ENCODE measurements at regions of chr4 and their contacts with region 1.

Region 1: GRCh38 chr4:114659386-114660008 is 60.9 kb downstream of the UGT8 start:
- DNase-seq: peak; percentile 68
- ATAC-seq: peak; percentile 97
- H3K4me3 ChIP-seq: no peak overlapping the region
- H3K27ac ChIP-seq: no peak overlapping the region
- H3K4me1 ChIP-seq: no peaks in the 10 kb centered on the region
- H3K27me3 ChIP-seq: no peaks in the 10 kb centered on the region
- CTCF ChIP-seq: peak; percentile 84

Region 2: GRCh38 chr4:113987382-113987941 is 672.0 kb before region 1 on chr4:
- CTCF ChIA-PET with region 1: no interaction called
- POLR2A ChIA-PET with region 1: no interaction called
- intact Hi-C with region 1: no loop called
- DNase-seq: no peak
- ATAC-seq: no peak
- H3K4me3 ChIP-seq: no peak overlapping the region
- H3K27ac ChIP-seq: no peak overlapping the region
- H3K4me1 ChIP-seq: no peaks in the 10 kb centered on the region
- H3K27me3 ChIP-seq: no peaks in the 10 kb centered on the region
- CTCF ChIP-seq: no peak

Region 3: GRCh38 chr4:114386637-114387233 is 272.8 kb before region 1 on chr4:
- CTCF ChIA-PET with region 1: interaction called, 6 read pairs
- POLR2A ChIA-PET with region 1: no interaction called
- intact Hi-C with region 1: loop called (anchors 1 kb)
- DNase-seq: peak; percentile 55
- ATAC-seq: peak; percentile 42
- H3K4me3 ChIP-seq: no peak overlapping the region
- H3K27ac ChIP-seq: no peak overlapping the region
- H3K4me1 ChIP-seq: peaks cover 13% of the 10 kb centered on the region
- H3K27me3 ChIP-seq: no peaks in the 10 kb centered on the region
- CTCF ChIP-seq: peak; percentile 71

Region 4: DNA sequence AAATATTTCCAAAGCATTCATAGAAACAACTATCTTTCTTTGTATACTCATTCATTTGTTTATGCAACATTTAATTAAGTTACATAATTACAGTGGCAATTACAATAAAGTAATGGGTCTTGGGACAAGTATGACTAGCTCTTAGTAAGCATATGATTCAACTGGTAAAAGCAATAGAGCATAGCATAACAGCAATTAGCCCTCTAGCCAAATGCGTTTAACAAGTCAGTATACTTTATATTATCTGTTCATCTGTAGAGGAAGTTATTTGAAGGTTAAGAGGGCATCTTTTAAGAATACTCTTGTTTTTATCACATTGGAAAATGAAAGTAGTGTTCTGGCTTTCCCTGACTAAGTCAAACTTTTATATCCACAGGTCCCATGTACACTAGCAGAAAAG is 259.0 kb before region 1 on chr4:
- CTCF ChIA-PET with region 1: interaction called, 3 read pairs
- POLR2A ChIA-PET with region 1: no interaction called
- intact Hi-C with region 1: loop called (anchors 5 kb)
- DNase-seq: peak; percentile 46
- ATAC-seq: peak; percentile 87
- H3K4me3 ChIP-seq: no peak overlapping the region
- H3K27ac ChIP-seq: no peak overlapping the region
- H3K4me1 ChIP-seq: 0 out of 2 replicates have a peak, but pooled peaks cover 4% of the 10 kb centered on the region
- H3K27me3 ChIP-seq: no peaks in the 10 kb centered on the region
- CTCF ChIP-seq: no peak

Region 5: GRCh38 chr4:114417214-114417613 is 242.3 kb before region 1 on chr4:
- CTCF ChIA-PET with region 1: no interaction called
- POLR2A ChIA-PET with region 1: no interaction called
- intact Hi-C with region 1: loop called (anchors 1 kb)
- DNase-seq: peak; percentile 13
- ATAC-seq: peak; percentile 49; the same call in 1 of the 2 replicates
- H3K4me3 ChIP-seq: no peak overlapping the region
- H3K27ac ChIP-seq: no peak overlapping the region
- H3K4me1 ChIP-seq: no peaks in the 10 kb centered on the region
- H3K27me3 ChIP-seq: no peaks in the 10 kb centered on the region
- CTCF ChIP-seq: peak; percentile 35; the same call in 1 of the 2 replicates

Region 6: DNA sequence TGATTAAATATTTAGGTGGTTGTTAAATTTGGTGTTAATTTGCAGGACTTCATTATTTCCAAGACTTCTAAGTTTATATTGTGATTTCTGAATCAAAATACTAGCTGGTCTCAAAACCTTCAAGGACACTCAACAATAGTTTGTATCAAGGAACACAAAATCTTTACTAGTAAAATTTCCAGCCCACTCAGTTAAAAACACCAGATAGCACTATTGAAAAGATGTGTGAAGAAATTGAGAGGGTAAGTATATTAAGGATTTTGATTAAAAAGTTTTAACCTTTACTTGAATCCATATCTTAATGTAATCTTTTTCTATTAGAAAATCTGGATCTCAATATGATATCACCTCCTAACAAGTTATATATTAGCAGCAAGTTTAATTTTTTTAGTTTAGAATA is 150.2 kb before region 1 on chr4:
- CTCF ChIA-PET with region 1: no interaction called
- POLR2A ChIA-PET with region 1: no interaction called
- intact Hi-C with region 1: loop called (anchors 1 kb)
- DNase-seq: no peak
- ATAC-seq: no peak
- H3K4me3 ChIP-seq: no peak overlapping the region
- H3K27ac ChIP-seq: no peak overlapping the region
- H3K4me1 ChIP-seq: peaks cover 24% of the 10 kb centered on the region
- H3K27me3 ChIP-seq: no peaks in the 10 kb centered on the region
- CTCF ChIP-seq: no peak; the same call in 1 of the 2 replicates

Region 7: DNA sequence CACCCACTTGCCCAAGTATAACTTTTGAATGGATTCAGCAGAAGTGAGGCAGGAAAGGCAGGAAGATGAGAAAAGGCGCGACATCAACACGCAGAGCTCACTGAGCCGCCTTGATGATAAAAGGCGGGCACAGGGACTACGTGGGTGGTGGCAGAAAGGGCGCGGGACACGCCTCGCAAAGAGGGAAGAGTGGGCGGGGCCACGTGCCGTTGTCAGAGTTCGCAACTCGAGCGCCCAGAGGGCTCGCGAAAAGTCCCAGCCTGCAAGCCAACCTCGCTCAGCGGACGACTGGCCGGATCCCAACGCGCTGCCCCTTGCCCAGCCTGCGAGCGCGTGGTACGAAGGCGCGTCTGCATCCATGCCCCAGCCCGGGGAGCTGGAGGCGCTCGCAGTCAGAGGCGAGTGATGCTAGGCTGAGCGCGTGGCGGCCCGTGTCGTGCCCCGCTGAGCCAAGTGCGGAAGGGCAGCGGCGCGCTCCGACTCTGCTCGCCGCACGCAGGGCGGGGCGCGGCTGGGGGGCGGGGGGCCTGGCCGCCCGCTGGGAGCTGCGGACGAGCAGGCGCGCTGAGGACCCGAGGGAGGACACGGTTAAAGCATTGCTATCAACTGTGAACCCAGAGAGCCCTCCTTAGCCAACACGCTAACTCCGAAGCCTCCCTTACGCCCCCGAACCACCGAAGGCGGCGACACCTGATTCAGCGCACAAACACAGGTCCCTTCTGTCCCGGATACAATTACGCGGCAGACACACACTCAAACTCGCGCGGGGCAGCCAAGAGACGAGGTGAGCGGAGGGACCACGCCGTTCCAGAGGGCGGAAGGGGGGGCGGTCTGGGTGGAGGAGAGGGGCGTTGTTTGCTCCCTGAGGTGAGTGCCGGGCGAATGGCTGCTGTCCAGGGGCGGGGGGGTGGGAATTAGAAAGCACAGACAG is 61.0 kb before region 1 on chr4 and contains the start of gene UGT8:
- CTCF ChIA-PET with region 1: no interaction called
- POLR2A ChIA-PET with region 1: no interaction called
- intact Hi-C with region 1: loop called (anchors 1 kb)
- DNase-seq: peak; percentile 34
- ATAC-seq: peak; percentile 63
- H3K4me3 ChIP-seq: peak within 1 kb of the TSS; percentile 68
- H3K27ac ChIP-seq: no peak within 1 kb of the TSS
- H3K4me1 ChIP-seq: no peaks in the 10 kb centered on the region
- H3K27me3 ChIP-seq: peaks cover 20% of the 10 kb centered on the region
- CTCF ChIP-seq: no peak
- total RNA-seq, gene UGT8: 1.8 and 3.4 TPM in 2 replicates

Region 8: GRCh38 chr4:114694770-114695169 is 35.3 kb after region 1 on chr4:
- CTCF ChIA-PET with region 1: interaction called, 21 read pairs
- POLR2A ChIA-PET with region 1: no interaction called
- intact Hi-C with region 1: loop called (anchors 2 kb)
- DNase-seq: peak; percentile 59
- ATAC-seq: no peak
- H3K4me3 ChIP-seq: no peak overlapping the region
- H3K27ac ChIP-seq: no peak overlapping the region
- H3K4me1 ChIP-seq: no peaks in the 10 kb centered on the region
- H3K27me3 ChIP-seq: no peaks in the 10 kb centered on the region
- CTCF ChIP-seq: peak; percentile 64

Measured in PC-3 (cell line).